Activated CD4-positive, alpha-beta memory T cell treated with anti-CD3 and anti-CD28 coated beads for 36 hours (primary cell): ENCODE measurements at regions of chr4 and their contacts with region 1.

Region 1: DNA sequence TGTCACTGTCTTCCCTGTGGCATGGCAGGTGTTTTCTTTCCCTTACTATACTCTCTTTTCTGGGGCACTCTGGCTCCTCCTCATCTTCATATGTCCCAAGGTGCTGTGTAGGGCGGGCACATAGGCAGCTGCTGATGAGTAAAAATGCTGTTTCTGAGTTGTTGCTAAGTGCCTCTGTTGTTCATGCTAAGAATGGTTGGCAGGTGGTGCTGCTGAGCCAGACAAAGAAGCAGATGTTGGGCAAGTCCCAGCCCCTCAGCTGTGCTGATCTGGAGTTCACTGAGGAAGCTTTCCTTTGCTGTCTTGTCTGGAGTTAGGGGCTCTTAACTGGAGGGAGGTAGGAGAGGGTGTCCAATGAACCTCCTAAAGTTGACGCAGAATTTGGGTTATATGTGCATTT is 40.6 kb downstream of the HADH start:
- DNase-seq: peak; percentile 86
- H3K4me3 Mint-ChIP-seq: no peak overlapping the region
- H3K27ac Mint-ChIP-seq: peak overlapping the region; percentile 82
- H3K4me1 Mint-ChIP-seq: peaks cover 50% of the 10 kb centered on the region
- H3K27me3 Mint-ChIP-seq: no peaks in the 10 kb centered on the region

Region 2: GRCh38 chr4:106898621-106899230 is 1131.6 kb before region 1 on chr4:
- CTCF ChIA-PET with region 1: no interaction called
- POLR2A ChIA-PET with region 1: no interaction called
- intact Hi-C with region 1: no loop called
- DNase-seq: peak; percentile 12
- H3K4me3 Mint-ChIP-seq: no peak overlapping the region
- H3K27ac Mint-ChIP-seq: no peak overlapping the region
- H3K4me1 Mint-ChIP-seq: no peaks in the 10 kb centered on the region
- H3K27me3 Mint-ChIP-seq: no peaks in the 10 kb centered on the region

Region 3: DNA sequence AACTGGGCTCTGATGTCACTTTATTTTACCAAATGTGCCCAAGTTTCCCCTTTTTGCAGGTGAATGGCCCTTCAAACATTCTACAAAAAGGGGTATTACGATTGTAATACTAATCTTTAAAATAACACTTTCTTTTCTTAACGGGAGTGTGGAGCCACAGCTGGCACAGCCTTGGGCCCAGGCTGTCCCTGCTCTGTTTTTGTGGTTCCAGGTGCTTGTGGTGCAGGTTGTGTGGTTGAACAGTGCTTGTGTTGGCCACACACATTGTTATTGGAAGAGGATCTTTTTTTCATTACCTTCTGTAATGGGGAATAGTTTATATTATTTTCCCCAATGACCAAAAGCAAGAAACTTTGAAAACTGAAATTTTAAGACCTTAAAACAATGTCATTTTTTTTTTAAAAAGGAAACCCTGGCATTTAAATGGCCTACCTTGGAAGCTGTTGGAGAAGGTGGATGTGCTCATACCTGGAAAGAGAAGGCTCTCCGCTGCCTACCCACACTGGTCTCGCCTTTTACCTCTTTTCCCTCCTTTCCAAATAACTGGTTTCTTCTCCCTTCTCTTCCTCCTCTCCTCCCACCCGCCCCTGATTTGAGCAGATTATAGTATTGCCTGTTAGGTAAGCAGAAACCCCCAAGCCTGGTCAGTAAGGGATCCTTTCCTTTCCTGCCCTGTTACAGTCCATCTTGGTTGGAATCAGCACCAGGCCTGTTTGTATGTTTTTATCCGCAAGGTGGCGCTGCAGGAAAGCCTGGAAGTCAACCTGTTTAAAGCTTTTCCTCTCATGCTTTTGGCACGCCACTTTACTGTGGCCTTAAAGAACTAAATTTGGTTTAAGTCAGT is 12.1 kb before region 1 on chr4:
- CTCF ChIA-PET with region 1: interaction called, 44 read pairs
- POLR2A ChIA-PET with region 1: no interaction called
- intact Hi-C with region 1: no loop called
- DNase-seq: peak; percentile 88
- H3K4me3 Mint-ChIP-seq: no peak overlapping the region
- H3K27ac Mint-ChIP-seq: no peak overlapping the region
- H3K4me1 Mint-ChIP-seq: peaks cover 8% of the 10 kb centered on the region
- H3K27me3 Mint-ChIP-seq: no peaks in the 10 kb centered on the region

Region 4: GRCh38 chr4:108080747-108081146 is 50.4 kb after region 1 on chr4:
- CTCF ChIA-PET with region 1: interaction called, 3 read pairs
- POLR2A ChIA-PET with region 1: no interaction called
- intact Hi-C with region 1: loop called (anchors 1 kb)
- DNase-seq: peak; percentile 58
- H3K4me3 Mint-ChIP-seq: peak overlapping the region; percentile 59
- H3K27ac Mint-ChIP-seq: peak overlapping the region; percentile 83
- H3K4me1 Mint-ChIP-seq: peaks cover 55% of the 10 kb centered on the region
- H3K27me3 Mint-ChIP-seq: no peaks in the 10 kb centered on the region

Region 5: DNA sequence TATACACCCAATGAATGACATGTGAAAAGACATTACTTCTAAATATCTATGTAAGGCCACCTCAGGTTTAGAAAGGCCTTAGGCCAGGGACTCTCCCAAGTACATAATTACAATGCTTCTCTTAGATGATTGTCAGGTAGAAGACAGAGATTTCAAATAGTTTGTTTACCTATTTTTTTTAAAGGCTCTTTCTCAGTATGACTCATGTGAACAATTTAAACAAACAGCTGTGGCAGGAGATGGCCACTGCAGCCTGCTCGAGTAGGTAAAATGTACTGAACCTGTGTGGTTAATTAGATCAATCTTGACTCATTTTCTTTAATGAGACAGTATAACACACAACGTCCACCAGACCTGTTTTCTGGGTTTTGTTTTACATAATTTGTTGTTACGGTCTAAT is 88.2 kb after region 1 on chr4:
- CTCF ChIA-PET with region 1: interaction called, 6 read pairs
- POLR2A ChIA-PET with region 1: interaction called, 3 read pairs
- intact Hi-C with region 1: loop called (anchors 2 kb)
- DNase-seq: peak; percentile 47
- H3K4me3 Mint-ChIP-seq: peak overlapping the region; percentile 20
- H3K27ac Mint-ChIP-seq: peak overlapping the region; percentile 85
- H3K4me1 Mint-ChIP-seq: peaks cover 88% of the 10 kb centered on the region
- H3K27me3 Mint-ChIP-seq: no peaks in the 10 kb centered on the region

Region 6: GRCh38 chr4:108181704-108182103 is 151.4 kb after region 1 on chr4:
- CTCF ChIA-PET with region 1: interaction called, 20 read pairs
- POLR2A ChIA-PET with region 1: no interaction called
- intact Hi-C with region 1: no loop called
- DNase-seq: no peak
- H3K4me3 Mint-ChIP-seq: no peak overlapping the region
- H3K27ac Mint-ChIP-seq: no peak overlapping the region
- H3K4me1 Mint-ChIP-seq: no peaks in the 10 kb centered on the region
- H3K27me3 Mint-ChIP-seq: no peaks in the 10 kb centered on the region

Region 7: DNA sequence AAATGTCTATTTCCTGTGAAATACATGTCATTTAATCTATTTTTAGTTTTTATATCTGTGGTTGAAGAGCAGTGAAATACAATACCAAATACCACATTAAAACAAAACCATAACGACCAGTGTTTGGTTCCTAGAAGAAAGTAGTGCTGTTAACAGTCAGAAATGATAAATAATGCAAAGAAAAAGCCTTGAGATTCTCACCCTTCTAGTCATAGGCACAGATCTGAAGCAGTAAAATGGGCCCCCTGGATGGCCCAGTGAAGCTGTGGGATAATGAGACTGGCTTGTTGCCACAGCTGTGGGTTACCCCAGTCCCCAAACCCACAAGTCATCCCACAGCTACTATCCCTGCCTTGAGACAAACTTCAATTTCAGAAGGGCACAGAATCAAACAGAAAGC is 452.7 kb after region 1 on chr4:
- CTCF ChIA-PET with region 1: interaction called, 6 read pairs
- POLR2A ChIA-PET with region 1: no interaction called
- intact Hi-C with region 1: loop called (anchors 5 kb)
- DNase-seq: peak; percentile 64
- H3K4me3 Mint-ChIP-seq: peak overlapping the region; percentile 17
- H3K27ac Mint-ChIP-seq: no peak overlapping the region
- H3K4me1 Mint-ChIP-seq: peaks cover 27% of the 10 kb centered on the region
- H3K27me3 Mint-ChIP-seq: no peaks in the 10 kb centered on the region

Region 8: GRCh38 chr4:108620101-108620932 is 590.0 kb after region 1 on chr4 and contains the start of gene RPL34:
- CTCF ChIA-PET with region 1: no interaction called
- POLR2A ChIA-PET with region 1: no interaction called
- intact Hi-C with region 1: loop called (anchors 5 kb)
- DNase-seq: peak; percentile 97
- H3K4me3 Mint-ChIP-seq: peak within 1 kb of the TSS; percentile 88
- H3K27ac Mint-ChIP-seq: peak within 1 kb of the TSS; percentile 95
- H3K4me1 Mint-ChIP-seq: peaks cover 48% of the 10 kb centered on the region
- H3K27me3 Mint-ChIP-seq: no peaks in the 10 kb centered on the region
- total RNA-seq, gene RPL34: 1,653 to 1,658 TPM